Activated CD4-positive, alpha-beta memory T cell treated with anti-CD3 and anti-CD28 coated beads for 36 hours (primary cell): ENCODE measurements at regions of chr7 and their contacts with region 1.

Region 1: GRCh38 chr7:101165075-101165957 is at the start of gene VGF:
- DNase-seq: peak; percentile 95
- H3K4me3 Mint-ChIP-seq: peak within 1 kb of the TSS; percentile 71
- H3K27ac Mint-ChIP-seq: no peak within 1 kb of the TSS
- H3K4me1 Mint-ChIP-seq: peaks cover 53% of the 10 kb centered on the region
- H3K27me3 Mint-ChIP-seq: peaks cover 60% of the 10 kb centered on the region
- total RNA-seq, gene VGF: not detected

Region 2: DNA sequence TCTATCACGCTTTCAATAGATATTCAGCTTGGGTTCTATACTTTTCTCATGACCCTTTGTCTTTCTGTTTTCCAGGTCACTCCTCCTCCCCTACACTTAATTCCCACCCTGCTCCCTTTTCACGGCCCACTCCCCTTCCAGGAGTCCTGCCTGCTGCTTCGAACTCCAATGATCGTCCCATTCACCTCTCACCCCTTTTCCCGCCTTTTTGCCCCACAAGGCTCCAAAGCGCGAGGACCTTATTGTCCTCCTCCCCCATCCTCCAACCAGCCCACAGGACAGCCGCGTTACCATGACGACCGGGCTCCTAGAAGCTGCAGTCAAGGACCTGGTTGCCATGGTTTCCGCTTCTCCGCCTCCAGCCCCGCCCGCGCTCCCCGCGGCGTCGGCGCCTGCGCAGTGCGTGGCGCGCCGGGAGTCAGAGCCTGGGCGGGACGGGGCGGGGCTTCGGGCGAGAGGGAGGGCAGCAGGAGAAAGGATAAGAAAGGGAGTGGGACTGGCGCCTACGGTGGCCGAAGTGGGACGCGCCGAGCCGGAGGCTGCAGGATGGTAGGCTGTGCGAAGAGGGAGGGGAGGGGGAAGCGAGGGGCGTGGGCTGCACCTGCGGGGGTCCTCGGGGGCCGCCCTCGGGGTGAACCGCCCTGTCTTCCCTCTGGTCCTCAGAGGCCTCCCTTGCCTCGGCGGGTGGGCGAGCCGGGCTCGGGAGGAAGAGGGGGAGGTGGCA is 11.2 kb before region 1 on chr7 and contains the start of gene AP1S1:
- CTCF ChIA-PET with region 1: interaction called, 4 read pairs
- POLR2A ChIA-PET with region 1: no interaction called
- intact Hi-C with region 1: loop called (anchors 1 kb)
- DNase-seq: peak; percentile 96
- H3K4me3 Mint-ChIP-seq: peak within 1 kb of the TSS; percentile 79
- H3K27ac Mint-ChIP-seq: peak within 1 kb of the TSS; percentile 47
- H3K4me1 Mint-ChIP-seq: peaks cover 10% of the 10 kb centered on the region
- H3K27me3 Mint-ChIP-seq: peaks cover 4% of the 10 kb centered on the region
- total RNA-seq, gene AP1S1: 41.1 to 44.7 TPM

Region 3: DNA sequence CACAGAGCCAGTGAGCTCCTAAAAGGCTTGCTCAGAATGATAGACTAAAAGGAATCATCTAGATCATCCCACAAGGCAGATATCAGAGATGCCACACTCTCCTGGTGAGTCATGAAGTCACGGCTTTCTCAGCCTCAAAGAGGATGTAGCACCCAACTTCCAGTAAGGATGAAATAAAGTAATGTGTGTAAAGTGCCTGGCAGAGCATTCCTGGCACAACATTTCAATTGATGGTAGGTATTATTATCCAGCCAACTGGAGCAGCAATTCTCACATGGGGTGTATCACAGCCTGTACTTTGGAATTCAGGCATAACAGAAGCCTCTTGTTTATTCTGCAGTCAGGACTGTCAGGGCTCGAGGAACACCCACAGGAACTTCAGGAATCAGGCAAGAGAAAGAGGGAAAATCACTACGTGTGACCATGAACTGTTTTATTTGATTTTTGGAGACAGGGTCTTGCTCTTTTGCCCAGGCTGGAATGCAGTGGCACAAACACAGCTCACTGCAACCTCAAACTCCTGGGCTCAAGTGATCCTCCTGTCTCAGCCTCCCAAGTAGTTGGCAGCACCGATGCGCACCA is 20.0 kb after region 1 on chr7:
- CTCF ChIA-PET with region 1: interaction called, 18 read pairs
- POLR2A ChIA-PET with region 1: no interaction called
- intact Hi-C with region 1: no loop called
- DNase-seq: no peak
- H3K4me3 Mint-ChIP-seq: no peak overlapping the region
- H3K27ac Mint-ChIP-seq: no peak overlapping the region
- H3K4me1 Mint-ChIP-seq: peaks cover 5% of the 10 kb centered on the region
- H3K27me3 Mint-ChIP-seq: peaks cover 22% of the 10 kb centered on the region

Region 4: GRCh38 chr7:101244375-101245146 is 79.2 kb after region 1 on chr7 and contains the start of gene FIS1:
- CTCF ChIA-PET with region 1: no interaction called
- POLR2A ChIA-PET with region 1: no interaction called
- intact Hi-C with region 1: loop called (anchors 2 kb)
- DNase-seq: peak; percentile 95
- H3K4me3 Mint-ChIP-seq: peak within 1 kb of the TSS; percentile 95
- H3K27ac Mint-ChIP-seq: peak within 1 kb of the TSS; percentile 92
- H3K4me1 Mint-ChIP-seq: peaks cover 22% of the 10 kb centered on the region
- H3K27me3 Mint-ChIP-seq: no peaks in the 10 kb centered on the region
- total RNA-seq, gene FIS1: 96.1 to 98.7 TPM